CD4-positive, alpha-beta T cell (primary cell): ENCODE measurements at regions of chr1 and their contacts with region 1.

Region 1: GRCh38 chr1:205658943-205659581 is 21.2 kb downstream of the SLC45A3 start:
- DNase-seq: peak; percentile 58 to 83 (median 70)
- ATAC-seq: peak; percentile 95
- H3K4me3 ChIP-seq: no peak overlapping the region
- H3K4me3 Mint-ChIP-seq: no peak overlapping the region
- H3K27ac ChIP-seq: no peak overlapping the region
- H3K27ac Mint-ChIP-seq: no peak overlapping the region
- H3K4me1 ChIP-seq: peaks cover 5% of the 10 kb centered on the region
- H3K4me1 Mint-ChIP-seq: no peaks in the 10 kb centered on the region
- H3K27me3 ChIP-seq: no peaks in the 10 kb centered on the region
- H3K27me3 Mint-ChIP-seq: peaks cover 4% of the 10 kb centered on the region
- CTCF ChIP-seq: peak; percentile 85

Region 2: GRCh38 chr1:205344066-205344928 is 314.8 kb before region 1 on chr1:
- CTCF ChIA-PET with region 1: no interaction called
- POLR2A ChIA-PET with region 1: no interaction called
- intact Hi-C with region 1: loop called in 1 of 2 experiments (anchors 10 kb)
- DNase-seq: peak in 12 of 14 experiments; percentile 17 to 69 (median 37)
- ATAC-seq: peak; percentile 90
- H3K4me3 ChIP-seq: peak overlapping the region; percentile 36
- H3K4me3 Mint-ChIP-seq: peak overlapping the region; percentile 75
- H3K27ac ChIP-seq: no peak overlapping the region
- H3K27ac Mint-ChIP-seq: no peak overlapping the region
- H3K4me1 ChIP-seq: peaks cover 19% of the 10 kb centered on the region
- H3K4me1 Mint-ChIP-seq: peaks cover 14% of the 10 kb centered on the region
- H3K27me3 ChIP-seq: peaks cover 30 to 46% of the 10 kb centered on the region in 2 experiments
- H3K27me3 Mint-ChIP-seq: peaks cover 52% of the 10 kb centered on the region
- CTCF ChIP-seq: no peak

Region 3: GRCh38 chr1:205528887-205529825 is 129.9 kb before region 1 on chr1:
- CTCF ChIA-PET with region 1: interaction called, 49 read pairs
- POLR2A ChIA-PET with region 1: interaction called, 3 read pairs
- intact Hi-C with region 1: loop called (anchors 1 kb)
- DNase-seq: peak; percentile 62 to 89 (median 80)
- ATAC-seq: peak; percentile 85
- H3K4me3 ChIP-seq: peak overlapping the region; percentile 32
- H3K4me3 Mint-ChIP-seq: no peak overlapping the region
- H3K27ac ChIP-seq: no peak overlapping the region
- H3K27ac Mint-ChIP-seq: no peak overlapping the region
- H3K4me1 ChIP-seq: peaks cover 9% of the 10 kb centered on the region
- H3K4me1 Mint-ChIP-seq: no peaks in the 10 kb centered on the region
- H3K27me3 ChIP-seq: no peaks in the 10 kb centered on the region
- H3K27me3 Mint-ChIP-seq: no peaks in the 10 kb centered on the region
- CTCF ChIP-seq: peak; percentile 85

Region 4: GRCh38 chr1:205711104-205712020 is 52.3 kb after region 1 on chr1:
- CTCF ChIA-PET with region 1: interaction called, 62 read pairs
- POLR2A ChIA-PET with region 1: no interaction called
- intact Hi-C with region 1: loop called (anchors 1 kb)
- DNase-seq: peak in 12 of 14 experiments; percentile 16 to 87 (median 47)
- ATAC-seq: peak; percentile 95
- H3K4me3 ChIP-seq: no peak overlapping the region
- H3K4me3 Mint-ChIP-seq: no peak overlapping the region
- H3K27ac ChIP-seq: no peak overlapping the region
- H3K27ac Mint-ChIP-seq: peak overlapping the region; percentile 47
- H3K4me1 ChIP-seq: no peaks in the 10 kb centered on the region
- H3K4me1 Mint-ChIP-seq: peaks cover 40% of the 10 kb centered on the region
- H3K27me3 ChIP-seq: no peaks in the 10 kb centered on the region
- H3K27me3 Mint-ChIP-seq: no peaks in the 10 kb centered on the region
- CTCF ChIP-seq: peak; percentile 91

Region 5: DNA sequence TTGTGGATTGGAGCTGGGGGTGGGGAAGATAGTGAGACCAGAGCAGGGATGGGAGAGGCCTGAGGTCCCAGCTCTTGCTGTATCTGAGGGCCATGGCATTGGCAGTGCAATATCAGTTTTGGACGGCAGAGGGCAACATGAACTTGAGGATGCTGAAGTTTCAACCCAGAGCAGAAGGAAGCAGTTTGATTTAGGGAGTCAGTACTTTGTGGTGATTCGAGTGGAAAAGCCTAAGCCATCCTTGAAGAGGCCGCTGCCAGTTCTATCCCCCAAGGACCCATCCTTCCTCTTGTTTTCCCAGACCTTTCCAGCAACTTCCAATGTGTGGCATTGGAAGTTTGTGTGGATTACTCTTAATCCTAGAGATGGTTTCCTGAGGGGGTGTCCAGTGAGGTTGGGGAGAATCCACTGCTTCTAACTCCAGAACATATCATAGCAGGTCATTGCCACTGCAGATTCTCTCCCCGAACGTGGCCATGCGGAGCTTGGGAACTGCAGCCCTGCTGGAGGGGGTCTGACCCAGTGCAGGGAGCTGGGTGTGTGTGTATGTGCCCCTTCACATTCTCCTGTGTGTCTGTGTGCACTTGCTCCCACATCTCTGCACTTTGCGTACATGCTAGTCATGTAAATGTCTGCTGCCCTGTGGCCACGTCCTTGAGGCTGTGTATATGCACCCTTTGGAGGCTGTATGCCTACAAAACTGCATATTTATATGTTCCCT is 260.1 kb after region 1 on chr1:
- CTCF ChIA-PET with region 1: interaction called, 10 read pairs
- POLR2A ChIA-PET with region 1: no interaction called
- intact Hi-C with region 1: no loop called
- DNase-seq: peak; percentile 33 to 79 (median 57)
- ATAC-seq: peak; percentile 57
- H3K4me3 ChIP-seq: no peak overlapping the region
- H3K4me3 Mint-ChIP-seq: no peak overlapping the region
- H3K27ac ChIP-seq: no peak overlapping the region
- H3K27ac Mint-ChIP-seq: no peak overlapping the region
- H3K4me1 ChIP-seq: no peaks in the 10 kb centered on the region
- H3K4me1 Mint-ChIP-seq: no peaks in the 10 kb centered on the region
- H3K27me3 ChIP-seq: no peaks in the 10 kb centered on the region
- H3K27me3 Mint-ChIP-seq: peaks cover under 1% of the 10 kb centered on the region
- CTCF ChIP-seq: peak; percentile 86

Region 6: GRCh38 chr1:206106328-206107167 is 447.5 kb after region 1 on chr1:
- CTCF ChIA-PET with region 1: no interaction called
- POLR2A ChIA-PET with region 1: no interaction called
- intact Hi-C with region 1: loop called in 1 of 2 experiments (anchors 5 kb)
- DNase-seq: peak; percentile 53 to 86 (median 69)
- ATAC-seq: peak; percentile 73
- H3K4me3 ChIP-seq: no peak overlapping the region
- H3K4me3 Mint-ChIP-seq: no peak overlapping the region
- H3K27ac ChIP-seq: no peak overlapping the region
- H3K27ac Mint-ChIP-seq: no peak overlapping the region
- H3K4me1 ChIP-seq: no peaks in the 10 kb centered on the region
- H3K4me1 Mint-ChIP-seq: no peaks in the 10 kb centered on the region
- H3K27me3 ChIP-seq: peaks cover 0 to 3% of the 10 kb centered on the region in 2 experiments
- H3K27me3 Mint-ChIP-seq: no peaks in the 10 kb centered on the region
- CTCF ChIP-seq: peak; percentile 90